Ovary (tissue), 10 donors: ENCODE measurements at regions of chr14 and their contacts with region 1.

Region 1: DNA sequence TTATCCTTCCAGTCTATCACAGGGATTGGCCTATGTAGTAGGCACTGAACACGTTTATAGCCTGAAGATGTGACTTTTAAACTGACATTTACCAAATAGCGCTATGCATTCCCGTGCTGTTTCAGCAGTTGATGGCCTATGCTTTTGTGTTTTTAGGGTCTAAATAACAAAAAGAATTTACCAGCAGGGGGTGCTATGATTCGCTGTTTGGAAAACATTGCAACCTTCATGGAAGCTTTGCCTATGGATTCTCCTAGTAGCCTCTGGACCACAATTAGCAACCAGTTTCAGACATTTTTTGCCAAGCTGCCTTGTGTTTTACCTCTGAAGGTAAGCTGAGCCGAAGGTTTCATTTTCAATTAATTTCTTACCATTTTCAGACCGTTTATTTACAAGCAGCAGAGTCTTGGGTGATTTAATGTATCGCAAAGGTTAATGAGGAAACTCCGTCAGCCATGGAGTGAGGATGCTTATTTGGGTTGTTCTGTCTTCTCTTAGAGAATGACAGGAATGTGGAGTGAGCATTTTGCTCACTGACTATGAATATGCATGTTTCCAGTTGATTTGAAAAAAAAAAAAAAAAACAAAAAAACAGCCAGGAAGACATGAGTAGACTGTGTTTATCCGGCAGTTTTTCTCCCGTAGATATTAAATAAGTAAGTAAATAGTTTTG is 133.1 kb downstream of the PRIMA1 start:
- DNase-seq: peak in 1 of 5 donors; percentile 20
- H3K4me3 ChIP-seq: no peak overlapping the region
- H3K27ac ChIP-seq: no peak overlapping the region
- H3K4me1 ChIP-seq: no peaks in the 10 kb centered on the region
- H3K27me3 ChIP-seq: no peaks in the 10 kb centered on the region
- CTCF ChIP-seq: peak in 2 of 3 donors; percentile 44 to 51
- EP300 ChIP-seq: no peak
- POLR2A ChIP-seq: no peak

Region 2: GRCh38 chr14:93788543-93789227 is 133.5 kb after region 1 on chr14:
- intact Hi-C with region 1: loop called in 2 of 4 experiments (anchors 5 to 10 kb)
- DNase-seq: peak; percentile 47 to 68 (median 60)
- H3K4me3 ChIP-seq: peak overlapping the region; percentile 63
- H3K27ac ChIP-seq: peak overlapping the region; percentile 71 to 83
- H3K4me1 ChIP-seq: no peaks in the 10 kb centered on the region
- H3K27me3 ChIP-seq: no peaks in the 10 kb centered on the region
- CTCF ChIP-seq: peak in 2 of 3 donors; percentile 26 to 43
- EP300 ChIP-seq: no peak
- POLR2A ChIP-seq: no peak

Region 3: GRCh38 chr14:93892923-93893558 is 237.8 kb after region 1 on chr14:
- intact Hi-C with region 1: loop called in 3 of 4 experiments (anchors 5 to 10 kb)
- DNase-seq: peak; percentile 59 to 82 (median 78)
- H3K4me3 ChIP-seq: no peak overlapping the region
- H3K27ac ChIP-seq: no peak overlapping the region
- H3K4me1 ChIP-seq: peaks cover 3% of the 10 kb centered on the region
- H3K27me3 ChIP-seq: no peaks in the 10 kb centered on the region
- CTCF ChIP-seq: peak; percentile 67 to 91 (median 77)
- EP300 ChIP-seq: no peak
- POLR2A ChIP-seq: no peak

Region 4: DNA sequence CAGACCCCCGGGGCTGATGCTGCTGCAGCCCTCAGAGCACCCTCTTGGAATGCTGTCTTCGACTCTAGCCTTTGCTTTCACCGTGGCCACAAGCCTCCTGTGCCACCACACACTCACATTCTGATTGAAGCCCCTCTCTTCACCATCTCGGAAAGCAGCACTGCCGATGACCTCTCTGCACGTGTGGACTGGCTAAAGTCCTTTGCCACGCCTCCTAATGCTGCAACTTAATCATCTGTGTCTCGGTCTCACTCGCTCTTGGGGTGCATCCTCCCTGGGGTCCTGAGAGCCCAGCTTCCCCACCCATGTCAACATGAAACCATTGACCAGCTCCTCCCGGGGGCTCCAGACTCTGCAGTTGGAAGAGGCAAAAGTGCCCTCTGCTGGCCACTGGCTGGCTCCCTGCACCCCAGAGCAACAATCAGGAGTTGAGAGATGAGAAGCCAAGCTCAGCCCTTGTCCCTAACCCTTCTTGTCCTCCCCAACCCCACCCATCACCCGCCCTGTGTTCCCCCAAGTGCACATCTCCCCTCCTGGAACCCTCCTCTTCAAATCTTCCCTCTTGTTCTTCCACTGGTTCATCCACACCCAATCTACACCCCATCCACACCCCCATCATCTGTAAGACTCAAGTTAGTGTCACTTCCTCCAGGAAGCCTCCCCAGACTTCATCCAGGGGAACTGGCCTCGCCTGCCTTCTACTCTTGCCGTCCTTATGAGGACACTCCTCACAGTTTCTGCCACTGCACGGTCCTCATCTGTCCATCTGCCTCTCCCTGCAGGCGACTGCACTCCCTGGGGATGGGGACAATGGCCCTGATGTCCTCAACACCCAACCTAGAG is 248.3 kb after region 1 on chr14:
- intact Hi-C with region 1: loop called in 2 of 4 experiments (anchors 5 to 10 kb)
- DNase-seq: no peak
- H3K4me3 ChIP-seq: no peak overlapping the region
- H3K27ac ChIP-seq: no peak overlapping the region
- H3K4me1 ChIP-seq: no peaks in the 10 kb centered on the region
- H3K27me3 ChIP-seq: no peaks in the 10 kb centered on the region
- CTCF ChIP-seq: no peak
- EP300 ChIP-seq: no peak
- POLR2A ChIP-seq: no peak